Dorsolateral prefrontal cortex (tissue), 120 donors: ENCODE measurements at regions of chr18 and their contacts with region 1.

Region 1: DNA sequence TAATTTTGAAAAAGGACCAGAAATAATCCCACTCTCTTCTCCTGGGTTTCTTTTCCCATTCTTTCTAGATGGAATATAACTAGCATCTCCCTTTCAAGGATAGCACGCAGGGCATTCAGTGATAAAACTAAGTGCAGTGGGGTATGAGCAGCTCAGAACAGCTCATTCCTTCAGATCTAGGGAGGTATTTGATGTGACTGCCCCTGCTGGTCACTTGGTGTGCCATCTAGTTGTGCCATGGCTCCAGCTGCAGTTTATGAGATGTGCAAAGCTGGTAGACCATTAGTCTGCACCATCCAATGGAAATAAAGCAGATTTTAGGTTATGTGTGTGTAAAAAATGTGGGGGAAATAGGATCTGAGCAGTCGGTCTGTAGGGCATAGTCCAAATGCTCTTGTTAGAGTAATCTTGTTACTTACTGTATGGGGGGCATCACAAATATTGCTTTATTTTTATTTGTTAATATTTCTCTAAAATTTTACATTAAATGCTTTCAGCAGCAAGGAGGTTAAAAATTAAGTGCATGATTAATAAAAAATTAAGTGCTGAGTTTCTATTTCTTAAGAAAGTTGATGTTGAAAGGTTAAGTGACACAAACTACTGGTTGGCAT is 38.9 kb downstream of the CTAGE1 start:
- DNase-seq: no peak
- H3K4me3 ChIP-seq: no peak overlapping the region
- H3K27ac ChIP-seq: no peak overlapping the region
- H3K27me3 ChIP-seq: peaks cover 0 to 16% (median 1%) of the 10 kb centered on the region in 45 donors
- CTCF ChIP-seq: peak in 14 of 56 donors; percentile 5 to 33 (median 24)

Region 2: DNA sequence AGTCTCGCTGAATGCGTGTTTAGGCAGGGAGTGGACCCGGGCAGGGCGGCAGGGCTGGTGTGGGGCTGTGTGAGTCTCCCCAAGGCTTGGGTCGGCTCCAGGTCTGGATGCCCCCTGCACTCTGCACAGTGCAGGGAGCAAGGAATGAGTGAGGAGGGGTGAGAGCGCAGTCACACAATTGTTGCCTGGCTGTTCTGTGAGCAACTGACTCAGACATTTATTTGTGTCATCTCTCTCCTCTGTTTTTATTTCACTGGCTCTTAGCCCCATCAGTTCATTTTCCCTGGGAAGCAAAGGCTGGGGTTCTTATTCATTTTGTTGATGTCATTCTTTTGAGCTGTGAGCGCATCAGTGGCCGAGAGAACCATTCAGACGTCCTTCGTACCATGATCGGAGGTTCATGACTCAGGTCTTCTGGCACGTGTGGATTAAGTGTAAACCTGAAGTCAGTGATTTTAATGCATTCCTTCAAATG is 148.3 kb before region 1 on chr18:
- intact Hi-C with region 1: loop called in 1 of 2 experiments (anchors 10 kb)
- DNase-seq: no peak
- H3K4me3 ChIP-seq: no peak overlapping the region
- H3K27ac ChIP-seq: no peak overlapping the region
- H3K27me3 ChIP-seq: peaks cover 0 to 28% (median 3%) of the 10 kb centered on the region in 45 donors
- CTCF ChIP-seq: no peak

Region 3: DNA sequence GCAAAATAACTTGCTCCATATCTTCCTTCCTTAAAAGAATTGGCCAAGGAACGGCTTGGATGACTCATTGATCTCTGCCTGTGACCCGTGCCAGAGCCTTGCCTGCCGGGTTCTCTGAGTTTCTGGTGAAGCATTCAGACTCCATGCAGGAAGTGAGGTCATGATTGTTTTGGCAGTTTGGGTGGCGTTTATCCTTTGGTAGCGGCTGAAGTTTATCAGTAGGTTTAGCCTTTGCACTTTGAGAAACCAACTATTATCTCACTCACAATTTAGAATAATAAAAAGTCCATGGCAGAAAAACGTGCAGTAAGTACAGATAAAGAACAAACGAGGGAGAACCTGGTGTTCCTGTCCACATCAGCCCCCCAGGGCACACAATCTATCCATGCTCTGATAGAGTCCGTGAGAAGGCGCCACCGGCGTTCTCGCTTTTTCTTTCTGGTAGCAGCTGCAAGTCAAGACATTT is 53.9 kb after region 1 on chr18:
- intact Hi-C with region 1: no loop called
- DNase-seq: no peak
- H3K4me3 ChIP-seq: no peak overlapping the region
- H3K27ac ChIP-seq: no peak overlapping the region
- H3K27me3 ChIP-seq: peaks cover 0 to 17% (median 0%) of the 10 kb centered on the region in 45 donors
- CTCF ChIP-seq: no peak